Common myeloid progenitor, CD34-positive (primary cell): ENCODE measurements at regions of chr20 and their contacts with region 1.

Region 1: DNA sequence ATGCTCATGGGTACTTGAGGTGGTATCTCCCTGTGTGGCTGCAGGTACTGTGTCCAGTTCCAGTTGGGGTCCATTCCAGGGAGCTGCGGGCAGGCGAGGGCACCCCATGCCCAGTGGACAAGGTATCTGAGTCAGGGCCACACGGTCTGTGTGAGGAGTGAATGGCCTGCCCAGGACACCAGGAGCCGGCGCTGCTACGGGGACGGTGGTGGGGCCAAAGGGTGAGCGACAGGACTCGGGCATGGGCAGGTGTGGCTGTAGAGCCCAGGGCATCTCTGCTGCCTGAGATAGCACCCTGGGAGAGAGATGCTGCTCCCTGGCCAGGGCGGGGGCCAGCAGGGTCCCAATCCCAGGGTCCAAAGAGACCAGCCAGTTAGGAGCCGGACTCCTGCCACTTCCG is 57.6 kb upstream of the ZNFX1 start:
- DNase-seq: no peak
- H3K4me3 ChIP-seq: no peak overlapping the region
- H3K27ac ChIP-seq: no peak overlapping the region
- H3K4me1 ChIP-seq: no peaks in the 10 kb centered on the region
- H3K27me3 ChIP-seq: peaks cover 0 to 3% (median 0%) of the 10 kb centered on the region in 5 experiments

Region 2: GRCh38 chr20:49323622-49324238 is 11.7 kb before region 1 on chr20:
- CTCF ChIA-PET with region 1: interaction called, 43 read pairs
- POLR2A ChIA-PET with region 1: no interaction called
- DNase-seq: peak; percentile 94 to 99 (median 98)
- H3K4me3 ChIP-seq: peak overlapping the region in 1 of 7 experiments; percentile 28
- H3K27ac ChIP-seq: peak overlapping the region; percentile 74 to 82
- H3K4me1 ChIP-seq: peaks cover 0 to 38% (median 21%) of the 10 kb centered on the region in 4 experiments
- H3K27me3 ChIP-seq: peaks cover 0 to 22% (median 7%) of the 10 kb centered on the region in 5 experiments

Region 3: GRCh38 chr20:49484180-49485140 is 149.0 kb after region 1 on chr20:
- CTCF ChIA-PET with region 1: interaction called, 15 read pairs
- POLR2A ChIA-PET with region 1: no interaction called
- DNase-seq: peak; percentile 67 to 74 (median 73)
- H3K4me3 ChIP-seq: peak overlapping the region in 1 of 7 experiments; percentile 58
- H3K27ac ChIP-seq: no peak overlapping the region
- H3K4me1 ChIP-seq: peaks cover 0 to 16% (median 9%) of the 10 kb centered on the region in 4 experiments
- H3K27me3 ChIP-seq: peaks cover 3 to 95% (median 25%) of the 10 kb centered on the region in 5 experiments

Region 4: DNA sequence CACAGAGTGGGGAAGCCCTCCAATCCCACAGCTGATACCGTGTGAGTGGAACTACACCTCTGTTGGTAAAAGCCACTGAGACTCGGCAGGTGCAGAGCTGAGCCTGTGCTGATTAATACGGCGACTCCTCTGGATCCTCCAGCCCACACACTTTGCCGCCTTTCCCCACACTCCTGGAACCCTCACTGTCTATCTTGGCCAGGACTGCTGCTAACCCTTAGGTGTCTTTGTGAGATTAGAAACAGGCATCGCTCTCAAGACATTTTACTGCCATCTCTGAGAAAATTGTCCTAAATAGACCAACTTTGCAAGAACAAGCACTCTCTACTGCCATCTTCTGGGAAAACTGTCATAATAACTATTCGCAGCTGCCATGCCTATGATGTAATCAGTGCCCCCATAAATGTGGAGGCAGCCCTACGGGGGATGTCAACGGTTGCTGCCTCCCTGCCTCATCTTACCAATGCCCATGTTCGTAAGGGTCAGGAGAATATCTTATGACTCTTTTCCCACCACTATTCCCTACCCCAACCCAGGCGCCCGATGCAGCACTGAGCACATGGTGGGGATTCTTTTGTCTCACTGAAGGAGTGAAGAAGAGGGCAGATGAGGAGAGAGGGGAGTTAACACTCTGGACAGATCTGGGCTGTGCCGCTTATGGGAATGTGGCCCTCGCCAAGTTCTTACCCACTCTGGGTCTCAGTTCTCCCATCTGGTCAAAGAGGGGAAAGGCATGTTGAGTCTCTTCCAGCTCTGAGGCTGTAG is 173.1 kb after region 1 on chr20:
- CTCF ChIA-PET with region 1: interaction called, 36 read pairs
- POLR2A ChIA-PET with region 1: no interaction called
- DNase-seq: peak; percentile 57 to 79 (median 69)
- H3K4me3 ChIP-seq: no peak overlapping the region
- H3K27ac ChIP-seq: no peak overlapping the region
- H3K4me1 ChIP-seq: peaks cover 0 to 6% (median 4%) of the 10 kb centered on the region in 4 experiments
- H3K27me3 ChIP-seq: peaks cover 0 to 45% (median 14%) of the 10 kb centered on the region in 5 experiments